MCF 10A (cell line): ENCODE measurements at regions of chr13 and their contacts with region 1.

Region 1: DNA sequence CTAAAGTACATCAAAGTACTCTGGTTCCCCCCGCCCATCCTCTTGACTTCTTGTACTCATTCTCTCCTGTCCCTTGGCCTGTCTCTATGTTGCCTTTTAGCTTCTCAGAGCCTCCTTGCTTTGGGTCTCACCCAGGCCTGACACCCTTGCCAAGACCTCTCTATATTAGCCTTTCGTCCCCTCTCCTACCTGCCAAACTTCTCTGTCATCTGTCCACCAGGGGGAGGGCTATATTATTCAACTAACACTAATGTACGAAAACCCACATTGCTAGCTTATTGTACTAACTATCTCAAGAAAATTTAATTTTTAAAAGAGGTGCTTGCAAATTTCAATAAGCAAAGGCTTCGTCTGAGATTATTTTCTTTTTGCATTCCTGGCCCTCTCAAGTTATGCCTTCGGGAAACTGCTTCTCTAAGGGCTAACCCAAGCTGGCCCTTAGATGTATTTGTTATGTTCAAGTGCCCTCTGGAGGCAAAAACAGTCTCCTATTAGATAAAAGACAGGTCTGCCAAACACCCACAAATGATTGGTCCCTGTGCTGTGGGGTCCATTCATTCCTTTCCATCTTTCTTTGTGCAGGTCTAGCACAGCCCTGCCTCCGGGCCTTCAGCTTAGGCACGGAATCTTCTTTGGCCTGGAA is 6.3 kb upstream of the MRPS31 start:
- DNase-seq: peak; percentile 81
- H3K4me3 Mint-ChIP-seq: peak overlapping the region; percentile 34
- H3K27ac Mint-ChIP-seq: peak overlapping the region; percentile 73
- H3K4me1 Mint-ChIP-seq: peaks cover 21% of the 10 kb centered on the region
- H3K27me3 Mint-ChIP-seq: no peaks in the 10 kb centered on the region
- CTCF ChIP-seq: peak; percentile 77

Region 2: DNA sequence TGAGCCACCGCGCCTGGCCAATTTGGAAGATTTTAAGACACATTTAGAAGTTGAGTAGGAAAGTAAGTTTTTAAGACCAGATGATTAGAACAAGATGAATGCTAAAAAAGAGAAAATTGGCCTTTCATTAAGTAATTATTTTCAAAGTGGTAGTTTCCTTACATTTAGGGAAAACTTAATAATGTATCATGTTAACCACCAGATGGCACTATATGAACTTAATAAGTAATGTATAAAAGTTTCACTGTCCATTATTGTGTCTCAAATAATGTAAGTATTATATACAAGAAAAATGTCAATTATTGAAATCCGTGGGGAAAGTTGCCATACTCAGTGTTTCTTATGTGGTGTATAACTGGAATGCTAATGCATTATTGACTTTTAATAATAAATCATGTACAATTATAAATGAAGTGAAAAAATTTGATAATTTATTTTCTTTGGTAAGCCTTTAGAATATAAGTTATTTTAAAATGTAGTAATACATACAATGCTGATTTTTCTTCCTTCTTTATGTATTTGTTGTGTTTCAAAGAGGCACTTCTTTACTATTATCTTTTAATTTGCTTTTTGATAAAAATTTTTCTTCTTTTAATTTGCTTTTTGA is 1092.7 kb before region 1 on chr13:
- CTCF ChIA-PET with region 1: interaction called, 18 read pairs
- POLR2A ChIA-PET with region 1: interaction called, 3 read pairs
- intact Hi-C with region 1: loop called (anchors 2 kb)
- DNase-seq: peak; percentile 39
- H3K4me3 Mint-ChIP-seq: no peak overlapping the region
- H3K27ac Mint-ChIP-seq: no peak overlapping the region
- H3K4me1 Mint-ChIP-seq: no peaks in the 10 kb centered on the region
- H3K27me3 Mint-ChIP-seq: no peaks in the 10 kb centered on the region
- CTCF ChIP-seq: peak; percentile 18

Region 3: GRCh38 chr13:39765801-39766463 is 1011.4 kb before region 1 on chr13:
- CTCF ChIA-PET with region 1: interaction called, 5 read pairs
- POLR2A ChIA-PET with region 1: no interaction called
- intact Hi-C with region 1: loop called (anchors 5 kb)
- DNase-seq: peak; percentile 91
- H3K4me3 Mint-ChIP-seq: no peak overlapping the region
- H3K27ac Mint-ChIP-seq: no peak overlapping the region
- H3K4me1 Mint-ChIP-seq: peaks cover 32% of the 10 kb centered on the region
- H3K27me3 Mint-ChIP-seq: no peaks in the 10 kb centered on the region
- CTCF ChIP-seq: peak; percentile 48

Region 4: GRCh38 chr13:39783050-39783449 is 994.2 kb before region 1 on chr13:
- CTCF ChIA-PET with region 1: interaction called, 26 read pairs
- POLR2A ChIA-PET with region 1: no interaction called
- intact Hi-C with region 1: loop called (anchors 1 kb)
- DNase-seq: peak; percentile 36
- H3K4me3 Mint-ChIP-seq: no peak overlapping the region
- H3K27ac Mint-ChIP-seq: no peak overlapping the region
- H3K4me1 Mint-ChIP-seq: peaks cover 6% of the 10 kb centered on the region
- H3K27me3 Mint-ChIP-seq: no peaks in the 10 kb centered on the region
- CTCF ChIP-seq: peak; percentile 40

Region 5: GRCh38 chr13:40609972-40610726 is 167.1 kb before region 1 on chr13:
- CTCF ChIA-PET with region 1: no interaction called
- POLR2A ChIA-PET with region 1: no interaction called
- intact Hi-C with region 1: no loop called
- DNase-seq: peak; percentile 42
- H3K4me3 Mint-ChIP-seq: peak overlapping the region; percentile 33
- H3K27ac Mint-ChIP-seq: no peak overlapping the region
- H3K4me1 Mint-ChIP-seq: peaks cover 31% of the 10 kb centered on the region
- H3K27me3 Mint-ChIP-seq: no peaks in the 10 kb centered on the region
- CTCF ChIP-seq: no peak

Region 6: GRCh38 chr13:40764587-40765403 is 12.5 kb before region 1 on chr13:
- CTCF ChIA-PET with region 1: interaction called, 29 read pairs
- POLR2A ChIA-PET with region 1: no interaction called
- intact Hi-C with region 1: no loop called
- DNase-seq: no peak
- H3K4me3 Mint-ChIP-seq: no peak overlapping the region
- H3K27ac Mint-ChIP-seq: no peak overlapping the region
- H3K4me1 Mint-ChIP-seq: peaks cover 4% of the 10 kb centered on the region
- H3K27me3 Mint-ChIP-seq: no peaks in the 10 kb centered on the region
- CTCF ChIP-seq: no peak

Region 7: DNA sequence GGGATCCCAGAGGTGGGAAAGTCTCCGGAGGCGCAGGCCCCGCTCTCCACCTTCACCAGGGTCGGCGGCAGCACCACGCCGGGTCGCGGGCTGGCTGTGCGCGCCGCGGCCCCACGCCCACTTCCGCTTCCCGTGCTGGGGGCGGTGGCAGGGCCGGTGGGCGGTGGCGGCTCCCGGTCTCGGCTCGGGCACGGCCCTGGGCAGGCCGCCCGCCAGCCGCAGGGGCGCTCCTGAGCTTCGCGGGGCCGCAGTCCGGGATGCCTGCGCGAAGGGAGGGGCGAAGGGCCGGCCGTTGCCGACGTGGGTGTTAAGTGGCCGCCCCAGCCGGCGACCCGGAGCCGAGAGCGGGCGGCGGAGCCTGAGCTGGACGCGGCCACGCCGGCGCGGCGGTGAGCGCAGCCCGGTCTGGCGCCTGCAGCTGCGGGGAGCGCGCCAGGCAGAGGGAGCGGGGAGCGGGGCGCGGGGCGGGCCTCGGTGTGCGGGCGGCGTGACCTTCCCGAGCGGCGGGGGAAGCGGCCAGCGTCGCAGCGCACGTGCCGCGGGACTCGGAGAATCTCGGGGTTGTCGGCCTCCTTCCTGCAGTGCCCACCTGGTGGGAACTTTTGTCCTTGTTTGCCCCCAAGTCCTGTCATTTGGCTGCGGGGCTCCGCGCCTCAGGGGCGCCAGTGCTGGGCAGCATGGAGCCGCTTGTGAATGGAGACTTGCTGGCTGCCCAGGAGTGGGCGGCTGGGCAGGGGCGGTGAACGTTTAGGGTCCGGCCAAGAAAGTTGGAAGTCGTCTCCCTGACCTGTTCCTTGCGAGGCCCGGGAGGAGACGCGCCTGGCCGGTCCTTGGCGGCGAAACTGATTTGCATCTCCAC is 12.2 kb after region 1 on chr13 and contains the start of gene SLC25A15:
- CTCF ChIA-PET with region 1: interaction called, 42 read pairs
- POLR2A ChIA-PET with region 1: interaction called, 10 read pairs
- intact Hi-C with region 1: no loop called
- DNase-seq: peak; percentile 84
- H3K4me3 Mint-ChIP-seq: peak within 1 kb of the TSS; percentile 75
- H3K27ac Mint-ChIP-seq: no peak within 1 kb of the TSS
- H3K4me1 Mint-ChIP-seq: no peaks in the 10 kb centered on the region
- H3K27me3 Mint-ChIP-seq: no peaks in the 10 kb centered on the region
- CTCF ChIP-seq: peak; percentile 10
- total RNA-seq, gene SLC25A15: 14.3 and 15.5 TPM in 2 replicates

Region 8: GRCh38 chr13:40992678-40993518 is 215.6 kb after region 1 on chr13:
- CTCF ChIA-PET with region 1: no interaction called
- POLR2A ChIA-PET with region 1: no interaction called
- intact Hi-C with region 1: loop called (anchors 5 kb)
- DNase-seq: no peak
- H3K4me3 Mint-ChIP-seq: no peak overlapping the region
- H3K27ac Mint-ChIP-seq: no peak overlapping the region
- H3K4me1 Mint-ChIP-seq: peaks cover 28% of the 10 kb centered on the region
- H3K27me3 Mint-ChIP-seq: no peaks in the 10 kb centered on the region
- CTCF ChIP-seq: peak; percentile 9